HAP-1 (cell line): ENCODE measurements at regions of chr12 and their contacts with region 1.

Region 1: GRCh38 chr12:120710031-120710804 is at the start of gene UNC119B:
- DNase-seq: peak; percentile 39 to 82
- H3K4me3 ChIP-seq: peak within 1 kb of the TSS; percentile 71
- H3K4me1 ChIP-seq: peaks cover 9% of the 10 kb centered on the region
- H3K27me3 ChIP-seq: no peaks in the 10 kb centered on the region

Region 2: DNA sequence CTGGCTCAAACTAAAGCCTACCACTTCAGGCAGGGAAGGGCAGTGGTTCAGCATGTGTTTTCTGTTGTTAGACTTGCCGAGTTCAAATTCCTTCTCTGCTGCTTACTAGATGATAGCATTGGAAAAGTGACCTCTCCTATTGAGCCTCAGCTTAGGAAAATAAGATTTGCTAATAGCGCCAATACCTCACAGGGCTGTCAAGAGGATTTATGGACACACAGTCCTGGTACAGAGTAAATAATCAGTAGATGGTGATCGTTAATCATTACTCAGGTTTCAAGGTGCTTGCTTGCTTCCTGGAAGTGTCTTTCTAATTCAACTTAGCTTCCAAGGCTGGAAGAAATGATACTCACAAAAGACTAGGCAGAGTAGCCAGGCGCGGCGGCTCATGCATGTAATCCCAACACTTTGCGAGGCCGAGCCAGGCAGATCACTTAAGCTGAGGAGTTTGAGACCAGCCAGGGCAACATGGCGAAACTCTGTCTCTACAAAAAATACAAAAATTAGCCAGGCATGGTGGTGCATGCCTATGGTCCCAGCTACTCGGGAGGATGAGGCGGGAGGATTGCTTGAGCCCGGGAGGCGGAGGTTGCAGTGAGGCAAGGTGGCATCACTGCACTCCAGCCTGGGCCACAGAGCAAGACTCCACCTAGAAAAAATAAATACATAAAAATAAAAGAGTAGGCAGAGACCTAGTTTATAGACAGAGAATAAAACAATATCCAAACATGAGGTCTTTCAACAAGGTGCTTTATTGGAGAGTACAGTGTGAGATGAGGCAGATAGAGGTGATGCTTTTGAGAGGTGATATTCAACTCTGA is 388.6 kb before region 1 on chr12:
- in situ Hi-C with region 1: loop called (anchors 10 kb)
- DNase-seq: no peak
- H3K4me3 ChIP-seq: no peak overlapping the region
- H3K4me1 ChIP-seq: peaks cover 5% of the 10 kb centered on the region
- H3K27me3 ChIP-seq: no peaks in the 10 kb centered on the region

Region 3: GRCh38 chr12:120649442-120650232 is 60.6 kb before region 1 on chr12:
- in situ Hi-C with region 1: loop called (anchors 5 kb)
- DNase-seq: no peak
- H3K4me3 ChIP-seq: no peak overlapping the region; the same call in 1 of the 2 replicates
- H3K4me1 ChIP-seq: peaks cover 10% of the 10 kb centered on the region
- H3K27me3 ChIP-seq: no peaks in the 10 kb centered on the region